GM12878 (cell line): ENCODE measurements at regions of chr7 and their contacts with region 1.

Region 1: DNA sequence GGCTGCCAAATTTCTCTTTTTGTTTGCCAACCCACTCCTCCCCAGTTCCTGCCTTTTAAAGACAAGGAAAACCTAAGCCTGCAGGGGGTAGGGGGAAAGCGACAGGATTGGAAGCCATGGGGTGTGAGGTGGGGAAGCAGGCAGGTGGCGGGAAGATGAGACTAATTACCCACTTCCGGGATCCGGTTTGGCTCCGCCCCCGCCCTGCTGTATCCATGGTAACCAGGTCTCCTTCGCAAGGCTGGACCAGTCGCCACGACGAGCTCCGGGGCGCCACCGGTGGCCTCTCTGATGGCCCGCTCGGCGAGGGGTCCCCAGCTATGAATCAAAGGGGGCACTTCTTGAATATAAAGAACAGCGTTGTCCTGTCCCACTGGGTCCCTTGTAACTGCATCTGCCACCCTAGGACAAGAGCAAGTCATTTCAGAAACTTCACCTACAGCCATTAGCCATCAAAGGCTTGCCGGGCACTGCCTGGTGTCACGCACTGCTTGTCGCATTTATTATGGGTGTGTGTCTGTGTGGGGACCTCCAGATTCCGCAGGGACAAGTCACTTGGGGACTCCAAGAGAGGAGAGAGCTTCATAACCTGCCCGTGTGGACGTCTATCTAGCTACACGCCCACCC is 55.4 kb upstream of the LMTK2 start:
- DNase-seq: no peak
- ATAC-seq: peak; percentile 75
- H3K4me3 ChIP-seq: no peak overlapping the region
- H3K27ac ChIP-seq: no peak overlapping the region
- H3K4me1 ChIP-seq: no peaks in the 10 kb centered on the region
- H3K27me3 ChIP-seq: no peaks in the 10 kb centered on the region
- CTCF ChIP-seq: 0 out of 6 replicates have a peak, but pooled peaks of 1 of the 3 experiments have one; percentile 1
- EP300 ChIP-seq: no peak
- POLR2A ChIP-seq: no peak
- RAD21 ChIP-seq: no peak

Region 2: GRCh38 chr7:98133181-98133580 is 82.0 kb after region 1 on chr7:
- CTCF ChIA-PET with region 1: no interaction called
- POLR2A ChIA-PET with region 1: interaction called, 10 read pairs
- RAD21 ChIA-PET with region 1: no interaction called
- SMC1A ChIA-PET with region 1: interaction called, 4 read pairs
- in situ Hi-C with region 1: no loop called
- intact Hi-C with region 1: no loop called
- DNase-seq: peak; percentile 63
- ATAC-seq: peak; percentile 82
- H3K4me3 ChIP-seq: no peak overlapping the region
- H3K27ac ChIP-seq: no peak overlapping the region
- H3K4me1 ChIP-seq: peaks cover 39% of the 10 kb centered on the region
- H3K27me3 ChIP-seq: no peaks in the 10 kb centered on the region
- CTCF ChIP-seq: no peak
- EP300 ChIP-seq: peak in 1 of 2 experiments; percentile 82; a peak in 3 of 4 replicates
- POLR2A ChIP-seq: no peak
- RAD21 ChIP-seq: no peak

Region 3: GRCh38 chr7:98223898-98224840 is 172.9 kb after region 1 on chr7:
- CTCF ChIA-PET with region 1: no interaction called
- POLR2A ChIA-PET with region 1: no interaction called
- RAD21 ChIA-PET with region 1: no interaction called
- SMC1A ChIA-PET with region 1: no interaction called
- in situ Hi-C with region 1: no loop called
- intact Hi-C with region 1: no loop called
- DNase-seq: no peak
- ATAC-seq: no peak
- H3K4me3 ChIP-seq: no peak overlapping the region
- H3K27ac ChIP-seq: no peak overlapping the region
- H3K4me1 ChIP-seq: peaks cover 13% of the 10 kb centered on the region
- H3K27me3 ChIP-seq: no peaks in the 10 kb centered on the region
- CTCF ChIP-seq: no peak
- EP300 ChIP-seq: no peak
- POLR2A ChIP-seq: no peak
- RAD21 ChIP-seq: no peak